Vagina (tissue), 2 donors: ENCODE measurements at regions of chr2 and their contacts with region 1.

Region 1: GRCh38 chr2:233443468-233444183 is 89.3 kb downstream of the DGKD start:
- DNase-seq: no peak
- H3K4me3 ChIP-seq: no peak overlapping the region
- H3K27ac ChIP-seq: no peak overlapping the region
- H3K4me1 ChIP-seq: no peaks in the 10 kb centered on the region
- H3K27me3 ChIP-seq: no peaks in the 10 kb centered on the region
- CTCF ChIP-seq: peak; percentile 63 to 82 (median 63)
- POLR2A ChIP-seq: no peak

Region 2: DNA sequence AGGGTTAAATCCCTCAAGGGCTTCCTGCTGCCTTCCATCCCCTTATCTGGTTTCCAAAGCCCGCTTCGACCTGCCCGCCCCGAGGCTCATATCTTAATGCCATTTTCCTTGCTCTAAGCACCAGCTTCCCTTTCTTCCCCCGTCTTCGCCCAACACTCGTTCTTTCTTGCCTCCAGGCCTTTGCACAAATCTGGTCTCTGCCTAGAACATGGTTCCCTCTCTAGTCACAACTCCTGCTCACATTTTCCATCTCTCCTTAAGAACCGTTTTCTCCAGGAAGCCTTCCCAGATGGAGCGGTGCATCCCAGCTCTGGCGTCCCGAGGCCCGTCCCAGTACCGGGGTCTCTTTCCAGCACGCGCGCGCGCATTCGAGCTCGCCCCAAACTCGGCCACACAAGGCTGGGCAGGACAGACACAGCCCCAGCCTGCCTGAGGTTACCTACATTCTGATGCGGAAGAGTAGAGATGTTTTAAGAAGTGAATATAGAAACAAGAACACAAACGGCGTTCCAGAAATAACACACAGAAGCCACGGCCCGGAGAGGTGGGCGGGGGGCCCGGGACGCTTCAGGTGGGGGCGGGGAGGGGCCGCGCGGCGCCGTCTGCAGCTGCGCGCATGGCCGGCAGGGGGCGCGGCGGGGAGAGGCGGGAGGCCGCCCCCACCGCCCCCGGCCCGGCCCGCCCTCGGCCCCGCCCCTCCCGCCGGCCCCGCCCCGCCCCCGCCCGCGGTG is 89.7 kb before region 1 on chr2 and contains the start of gene DGKD:
- intact Hi-C with region 1: loop called (anchors 2 kb)
- DNase-seq: no peak
- H3K4me3 ChIP-seq: peak within 1 kb of the TSS; percentile 61 to 75
- H3K27ac ChIP-seq: peak within 1 kb of the TSS; percentile 42
- H3K4me1 ChIP-seq: peaks cover 32% of the 10 kb centered on the region
- H3K27me3 ChIP-seq: no peaks in the 10 kb centered on the region
- CTCF ChIP-seq: no peak
- POLR2A ChIP-seq: no peak
- total RNA-seq, gene DGKD: 13.3 TPM